PC-9 (cell line): ENCODE measurements at regions of chr16 and their contacts with region 1.

Region 1: DNA sequence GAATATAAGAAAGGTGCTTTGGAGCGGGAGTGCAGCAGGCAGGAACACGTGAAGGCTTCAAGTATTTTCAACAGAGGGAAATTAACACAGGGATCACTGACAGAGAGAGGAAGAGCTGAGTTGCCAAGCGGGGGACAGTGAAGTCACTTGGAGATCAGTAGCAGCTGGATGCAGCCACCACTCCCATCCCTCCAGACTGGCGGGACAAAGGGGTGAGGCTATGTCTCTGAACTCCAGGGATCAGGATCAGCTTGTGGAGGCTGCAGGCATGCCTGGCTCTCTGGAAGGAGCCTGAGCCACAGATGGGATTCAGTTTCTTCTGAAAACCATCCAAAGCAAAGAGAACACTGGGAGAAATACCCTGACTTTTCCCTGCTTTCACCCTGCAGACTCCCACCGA is 113.7 kb upstream of the IRX3 start:
- DNase-seq: no peak
- H3K4me3 ChIP-seq: no peak overlapping the region
- H3K27ac ChIP-seq: no peak overlapping the region
- H3K4me1 ChIP-seq: no peaks in the 10 kb centered on the region
- H3K27me3 ChIP-seq: no peaks in the 10 kb centered on the region
- CTCF ChIP-seq: no peak

Region 2: DNA sequence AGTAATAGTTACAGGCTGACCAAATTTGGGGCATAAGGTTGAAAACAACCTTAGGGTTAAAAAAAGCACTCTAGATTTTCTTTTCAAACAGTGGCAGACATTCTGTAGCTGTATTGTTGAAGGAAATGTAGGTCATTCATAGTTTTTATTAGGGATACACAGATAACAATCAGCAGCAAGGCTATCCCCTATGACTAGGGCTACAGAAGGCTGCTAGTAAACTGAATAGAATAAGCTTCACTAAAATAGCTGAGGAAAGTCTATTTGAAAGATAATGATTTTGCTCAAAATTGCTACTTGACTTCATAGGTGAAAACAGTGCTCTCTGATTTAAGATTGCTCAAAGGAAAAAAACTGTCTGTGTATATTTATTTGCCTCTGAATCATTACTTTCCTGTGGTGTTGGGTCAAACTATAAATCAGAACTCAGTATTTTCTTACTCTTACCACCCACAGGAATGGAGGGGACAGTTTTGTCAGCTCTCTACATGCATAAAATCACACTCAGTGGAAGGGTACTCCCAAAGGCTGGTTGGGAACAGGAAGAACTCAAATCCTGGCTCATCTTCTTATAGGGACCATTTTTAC is 721.4 kb before region 1 on chr16:
- CTCF ChIA-PET with region 1: interaction called, 23 read pairs
- POLR2A ChIA-PET with region 1: no interaction called
- intact Hi-C with region 1: no loop called
- DNase-seq: no peak
- H3K4me3 ChIP-seq: no peak overlapping the region
- H3K27ac ChIP-seq: no peak overlapping the region
- H3K4me1 ChIP-seq: no peaks in the 10 kb centered on the region
- H3K27me3 ChIP-seq: no peaks in the 10 kb centered on the region
- CTCF ChIP-seq: no peak

Region 3: GRCh38 chr16:54318941-54319340 is 81.3 kb before region 1 on chr16:
- CTCF ChIA-PET with region 1: no interaction called
- POLR2A ChIA-PET with region 1: no interaction called
- intact Hi-C with region 1: no loop called
- DNase-seq: peak in 1 of 2 experiments; percentile 59
- H3K4me3 ChIP-seq: no peak overlapping the region
- H3K27ac ChIP-seq: no peak overlapping the region
- H3K4me1 ChIP-seq: no peaks in the 10 kb centered on the region
- H3K27me3 ChIP-seq: no peaks in the 10 kb centered on the region
- CTCF ChIP-seq: no peak